ENCODE measurements at regions of chr12 and their contacts with region 1.

Region 1: GRCh38 chr12:96020314-96021003 is 14.9 kb downstream of the LTA4H start:
- DNase-seq: peak; percentile 77
- ATAC-seq: peak; percentile 95
- H3K4me3 ChIP-seq: peak overlapping the region in 4 of 5 experiments; percentile 6 to 28 (median 20)
- H3K4me3 Mint-ChIP-seq: peak overlapping the region; percentile 62
- H3K27ac ChIP-seq: peak overlapping the region; percentile 62 to 79
- H3K27ac Mint-ChIP-seq: peak overlapping the region; percentile 89
- H3K4me1 ChIP-seq: peaks cover 28 to 34% of the 10 kb centered on the region in 2 donors
- H3K4me1 Mint-ChIP-seq: peaks cover 30% of the 10 kb centered on the region
- H3K27me3 ChIP-seq: no peaks in the 10 kb centered on the region
- H3K27me3 Mint-ChIP-seq: no peaks in the 10 kb centered on the region
- CTCF ChIP-seq: no peak

Region 2: GRCh38 chr12:95763809-95764253 is 256.6 kb before region 1 on chr12:
- CTCF ChIA-PET with region 1: no interaction called
- POLR2A ChIA-PET with region 1: no interaction called
- intact Hi-C with region 1: no loop called
- DNase-seq: no peak
- ATAC-seq: no peak
- H3K4me3 ChIP-seq: no peak overlapping the region
- H3K4me3 Mint-ChIP-seq: no peak overlapping the region
- H3K27ac ChIP-seq: no peak overlapping the region
- H3K27ac Mint-ChIP-seq: no peak overlapping the region
- H3K4me1 ChIP-seq: no peaks in the 10 kb centered on the region
- H3K4me1 Mint-ChIP-seq: peaks cover 5% of the 10 kb centered on the region
- H3K27me3 ChIP-seq: peaks cover 0 to 5% (median 0%) of the 10 kb centered on the region in 4 experiments
- H3K27me3 Mint-ChIP-seq: peaks cover 18% of the 10 kb centered on the region
- CTCF ChIP-seq: no peak

Region 3: DNA sequence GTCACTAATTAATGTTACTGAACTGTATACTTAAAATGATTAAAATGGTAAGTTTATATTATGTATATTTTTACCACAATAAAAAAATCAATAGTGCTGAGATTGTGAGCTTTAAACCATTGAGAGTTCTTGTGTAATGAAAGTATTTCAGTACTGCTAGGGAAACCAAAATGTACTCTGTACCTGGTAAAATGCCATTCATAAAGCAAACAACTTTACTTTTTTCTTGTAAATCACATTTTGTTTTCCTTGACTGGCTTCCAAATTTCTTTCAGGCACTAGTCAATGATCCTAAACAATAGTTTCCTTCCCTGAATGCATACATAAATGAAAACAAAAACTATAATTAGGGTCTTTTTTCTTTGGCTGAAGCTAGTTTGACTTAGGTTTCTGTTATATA is 191.1 kb before region 1 on chr12:
- CTCF ChIA-PET with region 1: no interaction called
- POLR2A ChIA-PET with region 1: no interaction called
- intact Hi-C with region 1: no loop called
- DNase-seq: no peak
- ATAC-seq: no peak
- H3K4me3 ChIP-seq: no peak overlapping the region
- H3K4me3 Mint-ChIP-seq: no peak overlapping the region
- H3K27ac ChIP-seq: no peak overlapping the region
- H3K27ac Mint-ChIP-seq: no peak overlapping the region
- H3K4me1 ChIP-seq: no peaks in the 10 kb centered on the region
- H3K4me1 Mint-ChIP-seq: no peaks in the 10 kb centered on the region
- H3K27me3 ChIP-seq: peaks cover 0 to 5% (median 2%) of the 10 kb centered on the region in 4 experiments
- H3K27me3 Mint-ChIP-seq: peaks cover 38% of the 10 kb centered on the region
- CTCF ChIP-seq: no peak

Region 4: GRCh38 chr12:95942524-95943329 is 77.7 kb before region 1 on chr12 and contains the start of gene CCDC38:
- CTCF ChIA-PET with region 1: no interaction called
- POLR2A ChIA-PET with region 1: no interaction called
- intact Hi-C with region 1: no loop called
- DNase-seq: peak; percentile 85
- ATAC-seq: peak; percentile 88
- H3K4me3 ChIP-seq: peak within 1 kb of the TSS; percentile 68 to 94 (median 89)
- H3K4me3 Mint-ChIP-seq: peak within 1 kb of the TSS; percentile 98
- H3K27ac ChIP-seq: peak within 1 kb of the TSS; percentile 71 to 87
- H3K27ac Mint-ChIP-seq: peak within 1 kb of the TSS; percentile 92
- H3K4me1 ChIP-seq: peaks cover 9 to 11% of the 10 kb centered on the region in 2 donors
- H3K4me1 Mint-ChIP-seq: peaks cover 10% of the 10 kb centered on the region
- H3K27me3 ChIP-seq: no peaks in the 10 kb centered on the region
- H3K27me3 Mint-ChIP-seq: no peaks in the 10 kb centered on the region
- CTCF ChIP-seq: no peak
- total RNA-seq, gene CCDC38: 1.00 and 1.3 TPM in 2 replicates

Region 5: GRCh38 chr12:96208801-96209549 is 188.5 kb after region 1 on chr12:
- CTCF ChIA-PET with region 1: interaction called, 10 read pairs
- POLR2A ChIA-PET with region 1: no interaction called
- intact Hi-C with region 1: no loop called
- DNase-seq: peak; percentile 81
- ATAC-seq: peak; percentile 87
- H3K4me3 ChIP-seq: peak overlapping the region in 1 of 5 experiments; percentile 34
- H3K4me3 Mint-ChIP-seq: peak overlapping the region; percentile 81
- H3K27ac ChIP-seq: peak overlapping the region; percentile 46 to 68
- H3K27ac Mint-ChIP-seq: peak overlapping the region; percentile 90
- H3K4me1 ChIP-seq: peaks cover 95 to 98% of the 10 kb centered on the region in 2 donors
- H3K4me1 Mint-ChIP-seq: peaks cover 91% of the 10 kb centered on the region
- H3K27me3 ChIP-seq: no peaks in the 10 kb centered on the region
- H3K27me3 Mint-ChIP-seq: no peaks in the 10 kb centered on the region
- CTCF ChIP-seq: no peak

Region 6: DNA sequence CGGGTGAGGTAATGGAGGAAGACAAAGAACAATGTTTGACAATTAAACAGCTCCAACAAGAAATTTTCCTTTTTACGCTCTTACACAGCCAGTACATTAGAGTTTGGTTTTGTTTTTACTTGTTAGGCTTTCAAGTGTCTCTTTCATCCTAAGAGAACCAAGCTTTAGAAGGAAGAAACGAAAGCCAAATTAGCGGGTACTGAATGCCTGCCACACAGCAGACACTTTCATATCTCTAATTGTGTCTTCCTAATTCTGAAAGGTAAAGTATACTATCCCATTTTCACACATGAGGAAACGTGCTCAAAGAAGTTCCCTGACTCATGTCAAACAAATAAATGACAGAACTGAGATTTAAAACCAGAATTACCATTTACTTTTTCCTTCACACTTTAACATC is 314.8 kb after region 1 on chr12:
- CTCF ChIA-PET with region 1: no interaction called
- POLR2A ChIA-PET with region 1: no interaction called
- intact Hi-C with region 1: no loop called
- DNase-seq: no peak
- ATAC-seq: no peak
- H3K4me3 ChIP-seq: no peak overlapping the region
- H3K4me3 Mint-ChIP-seq: no peak overlapping the region
- H3K27ac ChIP-seq: peak overlapping the region in 1 of 2 donors; percentile 39
- H3K27ac Mint-ChIP-seq: no peak overlapping the region
- H3K4me1 ChIP-seq: peaks cover 0 to 5% of the 10 kb centered on the region in 2 donors
- H3K4me1 Mint-ChIP-seq: peaks cover 20% of the 10 kb centered on the region
- H3K27me3 ChIP-seq: no peaks in the 10 kb centered on the region
- H3K27me3 Mint-ChIP-seq: no peaks in the 10 kb centered on the region
- CTCF ChIP-seq: no peak

Measured in B cell (primary cell).